A673 (cell line): ENCODE measurements at regions of chr9 and their contacts with region 1.

Region 1: GRCh38 chr9:126398403-126399058 is 71.9 kb downstream of the MVB12B start:
- DNase-seq: peak; percentile 62
- H3K4me3 ChIP-seq: no peak overlapping the region
- H3K27ac ChIP-seq: no peak overlapping the region
- H3K4me1 ChIP-seq: no peaks in the 10 kb centered on the region
- H3K27me3 ChIP-seq: no peaks in the 10 kb centered on the region
- CTCF ChIP-seq: peak; percentile 99

Region 2: GRCh38 chr9:125407974-125408900 is 990.3 kb before region 1 on chr9:
- CTCF ChIA-PET with region 1: interaction called, 3 read pairs
- POLR2A ChIA-PET with region 1: no interaction called
- intact Hi-C with region 1: loop called (anchors 10 kb)
- DNase-seq: peak; percentile 86
- H3K4me3 ChIP-seq: peak overlapping the region; percentile 63
- H3K27ac ChIP-seq: peak overlapping the region; percentile 50
- H3K4me1 ChIP-seq: no peaks in the 10 kb centered on the region
- H3K27me3 ChIP-seq: no peaks in the 10 kb centered on the region
- CTCF ChIP-seq: peak; percentile 93

Region 3: GRCh38 chr9:126301985-126302603 is 96.4 kb before region 1 on chr9:
- CTCF ChIA-PET with region 1: interaction called, 11 read pairs
- POLR2A ChIA-PET with region 1: no interaction called
- intact Hi-C with region 1: loop called (anchors 1 kb)
- DNase-seq: peak; percentile 68
- H3K4me3 ChIP-seq: no peak overlapping the region
- H3K27ac ChIP-seq: no peak overlapping the region
- H3K4me1 ChIP-seq: no peaks in the 10 kb centered on the region
- H3K27me3 ChIP-seq: no peaks in the 10 kb centered on the region
- CTCF ChIP-seq: peak; percentile 80

Region 4: GRCh38 chr9:126317513-126317912 is 81.0 kb before region 1 on chr9:
- CTCF ChIA-PET with region 1: interaction called, 3 read pairs
- POLR2A ChIA-PET with region 1: no interaction called
- intact Hi-C with region 1: loop called (anchors 1 kb)
- DNase-seq: no peak
- H3K4me3 ChIP-seq: no peak overlapping the region
- H3K27ac ChIP-seq: no peak overlapping the region
- H3K4me1 ChIP-seq: no peaks in the 10 kb centered on the region
- H3K27me3 ChIP-seq: no peaks in the 10 kb centered on the region
- CTCF ChIP-seq: peak; percentile 47

Region 5: GRCh38 chr9:126448865-126449537 is 50.5 kb after region 1 on chr9:
- CTCF ChIA-PET with region 1: no interaction called
- POLR2A ChIA-PET with region 1: no interaction called
- intact Hi-C with region 1: no loop called
- DNase-seq: no peak
- H3K4me3 ChIP-seq: no peak overlapping the region
- H3K27ac ChIP-seq: no peak overlapping the region
- H3K4me1 ChIP-seq: no peaks in the 10 kb centered on the region
- H3K27me3 ChIP-seq: no peaks in the 10 kb centered on the region
- CTCF ChIP-seq: no peak